CD4-positive, alpha-beta T cell (primary cell): ENCODE measurements at regions of chr5 and their contacts with region 1.

Region 1: GRCh38 chr5:59799668-59800346 is 93.7 kb downstream of the PDE4D start:
- DNase-seq: peak in 4 of 14 experiments; percentile 21 to 70 (median 58)
- ATAC-seq: peak; percentile 62
- H3K4me3 ChIP-seq: no peak overlapping the region
- H3K4me3 Mint-ChIP-seq: no peak overlapping the region
- H3K27ac ChIP-seq: no peak overlapping the region
- H3K27ac Mint-ChIP-seq: no peak overlapping the region
- H3K4me1 ChIP-seq: no peaks in the 10 kb centered on the region
- H3K4me1 Mint-ChIP-seq: no peaks in the 10 kb centered on the region
- H3K27me3 ChIP-seq: peaks cover 0 to 4% of the 10 kb centered on the region in 2 experiments
- H3K27me3 Mint-ChIP-seq: peaks cover 5% of the 10 kb centered on the region
- CTCF ChIP-seq: peak; percentile 90

Region 2: GRCh38 chr5:58871648-58872242 is 928.1 kb before region 1 on chr5:
- CTCF ChIA-PET with region 1: no interaction called
- POLR2A ChIA-PET with region 1: no interaction called
- intact Hi-C with region 1: loop called (anchors 5 kb)
- DNase-seq: peak in 6 of 14 experiments; percentile 11 to 55 (median 32)
- ATAC-seq: no peak
- H3K4me3 ChIP-seq: no peak overlapping the region
- H3K4me3 Mint-ChIP-seq: no peak overlapping the region
- H3K27ac ChIP-seq: no peak overlapping the region
- H3K27ac Mint-ChIP-seq: no peak overlapping the region
- H3K4me1 ChIP-seq: no peaks in the 10 kb centered on the region
- H3K4me1 Mint-ChIP-seq: no peaks in the 10 kb centered on the region
- H3K27me3 ChIP-seq: peaks cover 0 to 4% of the 10 kb centered on the region in 2 experiments
- H3K27me3 Mint-ChIP-seq: peaks cover 19% of the 10 kb centered on the region
- CTCF ChIP-seq: peak; percentile 90

Region 3: GRCh38 chr5:59188419-59189225 is 611.2 kb before region 1 on chr5:
- CTCF ChIA-PET with region 1: interaction called, 3 read pairs
- POLR2A ChIA-PET with region 1: no interaction called
- intact Hi-C with region 1: loop called (anchors 5 kb)
- DNase-seq: peak; percentile 26 to 81 (median 48)
- ATAC-seq: peak; percentile 69
- H3K4me3 ChIP-seq: no peak overlapping the region
- H3K4me3 Mint-ChIP-seq: no peak overlapping the region
- H3K27ac ChIP-seq: no peak overlapping the region
- H3K27ac Mint-ChIP-seq: no peak overlapping the region
- H3K4me1 ChIP-seq: no peaks in the 10 kb centered on the region
- H3K4me1 Mint-ChIP-seq: peaks cover 5% of the 10 kb centered on the region
- H3K27me3 ChIP-seq: peaks cover 0 to 5% of the 10 kb centered on the region in 2 experiments
- H3K27me3 Mint-ChIP-seq: peaks cover 19% of the 10 kb centered on the region
- CTCF ChIP-seq: peak; percentile 95

Region 4: GRCh38 chr5:59390074-59390659 is 409.6 kb before region 1 on chr5:
- CTCF ChIA-PET with region 1: no interaction called
- POLR2A ChIA-PET with region 1: no interaction called
- intact Hi-C with region 1: loop called (anchors 1 kb)
- DNase-seq: peak in 4 of 14 experiments; percentile 16 to 48 (median 24)
- ATAC-seq: no peak
- H3K4me3 ChIP-seq: no peak overlapping the region
- H3K4me3 Mint-ChIP-seq: no peak overlapping the region
- H3K27ac ChIP-seq: no peak overlapping the region
- H3K27ac Mint-ChIP-seq: no peak overlapping the region
- H3K4me1 ChIP-seq: no peaks in the 10 kb centered on the region
- H3K4me1 Mint-ChIP-seq: no peaks in the 10 kb centered on the region
- H3K27me3 ChIP-seq: no peaks in the 10 kb centered on the region
- H3K27me3 Mint-ChIP-seq: peaks cover 4% of the 10 kb centered on the region
- CTCF ChIP-seq: peak; percentile 89

Region 5: GRCh38 chr5:59506285-59506877 is 293.4 kb before region 1 on chr5:
- CTCF ChIA-PET with region 1: no interaction called
- POLR2A ChIA-PET with region 1: no interaction called
- intact Hi-C with region 1: loop called (anchors 5 to 10 kb)
- DNase-seq: peak in 1 of 14 experiments; percentile 20
- ATAC-seq: no peak
- H3K4me3 ChIP-seq: no peak overlapping the region
- H3K4me3 Mint-ChIP-seq: no peak overlapping the region
- H3K27ac ChIP-seq: no peak overlapping the region
- H3K27ac Mint-ChIP-seq: no peak overlapping the region
- H3K4me1 ChIP-seq: no peaks in the 10 kb centered on the region
- H3K4me1 Mint-ChIP-seq: no peaks in the 10 kb centered on the region
- H3K27me3 ChIP-seq: no peaks in the 10 kb centered on the region
- H3K27me3 Mint-ChIP-seq: no peaks in the 10 kb centered on the region
- CTCF ChIP-seq: no peak

Region 6: GRCh38 chr5:59673438-59674058 is 126.3 kb before region 1 on chr5:
- CTCF ChIA-PET with region 1: no interaction called
- POLR2A ChIA-PET with region 1: no interaction called
- intact Hi-C with region 1: loop called in 1 of 2 experiments (anchors 5 kb)
- DNase-seq: peak in 3 of 14 experiments; percentile 34 to 59 (median 46)
- ATAC-seq: no peak
- H3K4me3 ChIP-seq: no peak overlapping the region
- H3K4me3 Mint-ChIP-seq: no peak overlapping the region
- H3K27ac ChIP-seq: no peak overlapping the region
- H3K27ac Mint-ChIP-seq: no peak overlapping the region
- H3K4me1 ChIP-seq: no peaks in the 10 kb centered on the region
- H3K4me1 Mint-ChIP-seq: no peaks in the 10 kb centered on the region
- H3K27me3 ChIP-seq: no peaks in the 10 kb centered on the region
- H3K27me3 Mint-ChIP-seq: peaks cover under 1% of the 10 kb centered on the region
- CTCF ChIP-seq: peak; percentile 97

Region 7: GRCh38 chr5:59760798-59761348 is 38.9 kb before region 1 on chr5:
- CTCF ChIA-PET with region 1: no interaction called
- POLR2A ChIA-PET with region 1: no interaction called
- intact Hi-C with region 1: loop called in 1 of 2 experiments (anchors 1 kb)
- DNase-seq: peak in 3 of 14 experiments; percentile 4 to 12 (median 12)
- ATAC-seq: no peak
- H3K4me3 ChIP-seq: no peak overlapping the region
- H3K4me3 Mint-ChIP-seq: no peak overlapping the region
- H3K27ac ChIP-seq: no peak overlapping the region
- H3K27ac Mint-ChIP-seq: no peak overlapping the region
- H3K4me1 ChIP-seq: no peaks in the 10 kb centered on the region
- H3K4me1 Mint-ChIP-seq: no peaks in the 10 kb centered on the region
- H3K27me3 ChIP-seq: no peaks in the 10 kb centered on the region
- H3K27me3 Mint-ChIP-seq: peaks cover 8% of the 10 kb centered on the region
- CTCF ChIP-seq: no peak

Region 8: GRCh38 chr5:59917121-59917520 is 117.3 kb after region 1 on chr5:
- CTCF ChIA-PET with region 1: no interaction called
- POLR2A ChIA-PET with region 1: no interaction called
- intact Hi-C with region 1: no loop called
- DNase-seq: no peak
- ATAC-seq: no peak
- H3K4me3 ChIP-seq: no peak overlapping the region
- H3K4me3 Mint-ChIP-seq: no peak overlapping the region
- H3K27ac ChIP-seq: no peak overlapping the region
- H3K27ac Mint-ChIP-seq: no peak overlapping the region
- H3K4me1 ChIP-seq: no peaks in the 10 kb centered on the region
- H3K4me1 Mint-ChIP-seq: no peaks in the 10 kb centered on the region
- H3K27me3 ChIP-seq: no peaks in the 10 kb centered on the region
- H3K27me3 Mint-ChIP-seq: no peaks in the 10 kb centered on the region
- CTCF ChIP-seq: no peak